HepG2 (cell line): ENCODE measurements at regions of chr21 and their contacts with region 1.

Region 1: GRCh38 chr21:41361786-41362604 is at the start of gene MX2:
- DNase-seq: peak; percentile 35
- ATAC-seq: peak; percentile 19
- H3K4me3 ChIP-seq: peak within 1 kb of the TSS; percentile 32 to 65 (median 41)
- H3K27ac ChIP-seq: peak within 1 kb of the TSS; percentile 15
- H3K4me1 ChIP-seq: peaks cover 64% of the 10 kb centered on the region
- H3K27me3 ChIP-seq: no peaks in the 10 kb centered on the region
- CTCF ChIP-seq: no peak
- EP300 ChIP-seq: no peak
- POLR2A ChIP-seq: no peak; a peak in 1 of 4 replicates
- RAD21 ChIP-seq: no peak
- total RNA-seq, gene MX2: 35.7 and 46.9 TPM in 2 replicates

Region 2: GRCh38 chr21:41289426-41289825 is 72.6 kb before region 1 on chr21:
- CTCF ChIA-PET with region 1: interaction called, 35 read pairs
- POLR2A ChIA-PET with region 1: interaction called, 3 read pairs
- in situ Hi-C with region 1: loop called (anchors 5 kb)
- intact Hi-C with region 1: no loop called
- DNase-seq: peak; percentile 5
- ATAC-seq: peak; percentile 88
- H3K4me3 ChIP-seq: no peak overlapping the region
- H3K27ac ChIP-seq: no peak overlapping the region
- H3K4me1 ChIP-seq: peaks cover 6% of the 10 kb centered on the region; the same call in 1 of the 2 replicates
- H3K27me3 ChIP-seq: peaks cover 0 to under 1% of the 10 kb centered on the region in 2 experiments; a peak in 1 of 5 replicates
- CTCF ChIP-seq: no peak
- EP300 ChIP-seq: no peak
- POLR2A ChIP-seq: no peak
- RAD21 ChIP-seq: no peak

Region 3: GRCh38 chr21:41501882-41502281 is 139.9 kb after region 1 on chr21:
- CTCF ChIA-PET with region 1: no interaction called
- POLR2A ChIA-PET with region 1: no interaction called
- in situ Hi-C with region 1: no loop called
- intact Hi-C with region 1: no loop called
- DNase-seq: no peak
- ATAC-seq: no peak
- H3K4me3 ChIP-seq: no peak overlapping the region
- H3K27ac ChIP-seq: no peak overlapping the region
- H3K4me1 ChIP-seq: peaks cover 58% of the 10 kb centered on the region
- H3K27me3 ChIP-seq: peaks cover 0 to 13% of the 10 kb centered on the region in 2 experiments; a peak in 2 of 5 replicates
- CTCF ChIP-seq: peak; percentile 29; the same call in 1 of the 2 replicates
- EP300 ChIP-seq: no peak
- POLR2A ChIP-seq: no peak
- RAD21 ChIP-seq: no peak